Mammary epithelial cell (primary cell): ENCODE measurements at regions of chr3 and their contacts with region 1.

Region 1: GRCh38 chr3:50611464-50612233 is at the start of gene CISH:
- DNase-seq: peak; percentile 92
- H3K4me3 ChIP-seq: peak within 1 kb of the TSS; percentile 61 to 82 (median 64)
- H3K27ac ChIP-seq: peak within 1 kb of the TSS; percentile 4
- H3K4me1 ChIP-seq: peaks cover 32% of the 10 kb centered on the region
- H3K27me3 ChIP-seq: no peaks in the 10 kb centered on the region
- CTCF ChIP-seq: peak; percentile 8 to 41
- total RNA-seq, gene CISH: 1.8 to 2.8 TPM

Region 2: DNA sequence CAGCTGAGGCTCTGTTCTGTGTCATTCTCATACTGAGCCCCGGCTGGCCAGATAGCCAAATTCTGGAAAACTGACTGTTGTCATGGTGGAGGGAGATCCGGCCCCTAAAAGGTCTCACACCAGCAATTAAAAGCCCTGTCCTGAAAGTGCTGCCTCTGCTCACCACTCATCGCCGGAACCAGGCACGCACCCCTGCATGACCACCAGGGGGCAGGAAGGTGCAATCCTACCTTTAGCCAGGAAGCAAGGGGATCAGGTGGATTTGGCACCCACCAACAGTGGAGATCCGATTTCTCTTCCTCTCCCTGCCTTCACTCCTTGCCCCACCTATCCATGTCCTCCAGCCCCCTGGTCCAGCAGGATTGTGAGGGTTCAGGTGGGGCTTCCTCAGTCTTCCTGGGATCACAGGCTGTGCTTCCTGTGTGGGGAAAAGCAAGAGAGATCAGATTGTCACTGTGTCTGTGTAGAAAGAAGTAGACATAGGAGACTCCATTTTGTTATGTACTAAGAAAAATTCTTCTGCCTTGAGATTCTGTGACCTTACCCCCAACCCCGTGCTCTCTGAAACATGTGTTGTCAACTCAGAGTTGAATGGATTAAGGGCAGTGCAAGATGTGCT is 92.1 kb before region 1 on chr3:
- CTCF ChIA-PET with region 1: no interaction called
- dilution Hi-C with region 1: no loop called
- in situ Hi-C with region 1: no loop called
- intact Hi-C with region 1: loop called (anchors 1 kb)
- DNase-seq: peak; percentile 38
- H3K4me3 ChIP-seq: no peak overlapping the region
- H3K27ac ChIP-seq: no peak overlapping the region
- H3K4me1 ChIP-seq: no peaks in the 10 kb centered on the region
- H3K27me3 ChIP-seq: no peaks in the 10 kb centered on the region
- CTCF ChIP-seq: peak; percentile 98

Region 3: DNA sequence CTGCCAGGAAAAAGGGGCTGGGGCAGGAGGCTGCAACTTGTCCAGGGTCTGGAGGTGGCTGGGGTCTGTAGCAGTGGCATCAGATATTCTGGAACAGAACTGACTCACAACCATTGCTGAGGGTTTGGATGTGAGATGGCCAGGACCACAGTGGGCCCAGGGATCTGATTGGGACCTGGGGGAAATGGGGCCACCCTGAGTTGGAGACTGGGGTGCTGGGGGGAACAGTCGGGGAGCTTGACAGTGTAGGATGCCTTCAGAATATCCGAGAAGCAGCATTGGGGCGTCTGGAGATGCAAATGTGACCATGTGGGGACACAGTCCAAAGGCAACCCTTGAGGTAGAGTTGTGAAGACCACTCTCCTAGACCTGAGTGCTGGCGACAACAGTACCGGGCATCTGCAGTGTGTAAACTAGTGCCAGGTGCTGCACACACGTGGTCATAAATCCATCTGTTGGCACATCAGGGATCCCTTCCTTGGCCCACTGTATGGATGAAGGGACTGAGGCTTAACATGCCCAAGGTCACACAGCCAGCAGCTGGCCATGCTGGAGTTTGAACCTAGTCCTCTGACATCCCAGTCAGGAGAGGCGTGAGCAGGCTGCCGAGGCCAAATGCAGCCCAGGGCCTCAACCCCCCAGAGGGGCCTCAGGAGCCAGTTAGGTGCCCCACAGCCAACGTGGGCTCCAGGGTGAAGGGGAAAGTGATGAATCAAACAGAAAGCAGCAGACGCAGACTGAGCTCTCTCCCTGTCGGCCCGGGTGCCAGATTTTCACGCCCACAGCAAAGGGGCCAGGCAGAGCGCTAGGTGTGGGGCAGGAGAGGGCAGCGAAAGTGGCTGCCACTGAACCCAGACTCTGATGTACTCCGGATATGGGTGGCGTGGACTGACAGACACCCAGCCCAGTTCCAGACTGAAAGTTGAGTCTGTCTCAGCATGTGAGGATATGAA is 23.6 kb before region 1 on chr3:
- CTCF ChIA-PET with region 1: interaction called, 11 read pairs
- dilution Hi-C with region 1: no loop called
- in situ Hi-C with region 1: no loop called
- intact Hi-C with region 1: loop called (anchors 2 kb)
- DNase-seq: no peak
- H3K4me3 ChIP-seq: no peak overlapping the region
- H3K27ac ChIP-seq: no peak overlapping the region
- H3K4me1 ChIP-seq: peaks cover 4% of the 10 kb centered on the region
- H3K27me3 ChIP-seq: no peaks in the 10 kb centered on the region
- CTCF ChIP-seq: no peak

Region 4: GRCh38 chr3:50671331-50671730 is 59.7 kb after region 1 on chr3:
- CTCF ChIA-PET with region 1: no interaction called
- dilution Hi-C with region 1: no loop called
- in situ Hi-C with region 1: no loop called
- intact Hi-C with region 1: no loop called
- DNase-seq: peak; percentile 71
- H3K4me3 ChIP-seq: no peak overlapping the region
- H3K27ac ChIP-seq: no peak overlapping the region
- H3K4me1 ChIP-seq: peaks cover 8% of the 10 kb centered on the region
- H3K27me3 ChIP-seq: peaks cover 28% of the 10 kb centered on the region
- CTCF ChIP-seq: no peak

Region 5: GRCh38 chr3:50885070-50885850 is 273.6 kb after region 1 on chr3:
- CTCF ChIA-PET with region 1: no interaction called
- dilution Hi-C with region 1: no loop called
- in situ Hi-C with region 1: no loop called
- intact Hi-C with region 1: loop called (anchors 1 kb)
- DNase-seq: peak; percentile 9
- H3K4me3 ChIP-seq: no peak overlapping the region
- H3K27ac ChIP-seq: no peak overlapping the region
- H3K4me1 ChIP-seq: no peaks in the 10 kb centered on the region
- H3K27me3 ChIP-seq: no peaks in the 10 kb centered on the region
- CTCF ChIP-seq: peak; percentile 29 to 46

Region 6: DNA sequence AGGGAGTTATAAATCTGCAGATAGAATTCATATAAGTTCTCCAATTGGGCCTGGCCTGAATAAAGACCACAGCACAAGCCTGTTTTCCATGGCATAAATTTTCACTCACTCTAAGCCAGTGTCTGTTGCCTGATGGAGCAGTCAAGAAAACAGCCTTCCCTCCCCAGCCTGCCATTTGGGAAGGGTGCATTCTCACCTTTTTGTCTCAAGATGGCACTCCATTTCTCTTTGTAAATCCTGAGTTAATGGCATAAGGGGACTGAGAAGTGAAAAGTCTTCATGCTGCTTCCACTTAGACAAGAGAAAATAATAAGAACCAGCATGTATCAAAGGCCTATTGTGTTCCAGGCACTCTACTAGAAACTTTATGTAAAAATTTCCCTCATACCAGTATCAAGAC is 657.8 kb after region 1 on chr3:
- CTCF ChIA-PET with region 1: no interaction called
- dilution Hi-C with region 1: no loop called
- in situ Hi-C with region 1: no loop called
- intact Hi-C with region 1: loop called (anchors 1 kb)
- DNase-seq: peak; percentile 31
- H3K4me3 ChIP-seq: no peak overlapping the region
- H3K27ac ChIP-seq: no peak overlapping the region
- H3K4me1 ChIP-seq: no peaks in the 10 kb centered on the region
- H3K27me3 ChIP-seq: no peaks in the 10 kb centered on the region
- CTCF ChIP-seq: peak; percentile 33 to 66

Region 7: DNA sequence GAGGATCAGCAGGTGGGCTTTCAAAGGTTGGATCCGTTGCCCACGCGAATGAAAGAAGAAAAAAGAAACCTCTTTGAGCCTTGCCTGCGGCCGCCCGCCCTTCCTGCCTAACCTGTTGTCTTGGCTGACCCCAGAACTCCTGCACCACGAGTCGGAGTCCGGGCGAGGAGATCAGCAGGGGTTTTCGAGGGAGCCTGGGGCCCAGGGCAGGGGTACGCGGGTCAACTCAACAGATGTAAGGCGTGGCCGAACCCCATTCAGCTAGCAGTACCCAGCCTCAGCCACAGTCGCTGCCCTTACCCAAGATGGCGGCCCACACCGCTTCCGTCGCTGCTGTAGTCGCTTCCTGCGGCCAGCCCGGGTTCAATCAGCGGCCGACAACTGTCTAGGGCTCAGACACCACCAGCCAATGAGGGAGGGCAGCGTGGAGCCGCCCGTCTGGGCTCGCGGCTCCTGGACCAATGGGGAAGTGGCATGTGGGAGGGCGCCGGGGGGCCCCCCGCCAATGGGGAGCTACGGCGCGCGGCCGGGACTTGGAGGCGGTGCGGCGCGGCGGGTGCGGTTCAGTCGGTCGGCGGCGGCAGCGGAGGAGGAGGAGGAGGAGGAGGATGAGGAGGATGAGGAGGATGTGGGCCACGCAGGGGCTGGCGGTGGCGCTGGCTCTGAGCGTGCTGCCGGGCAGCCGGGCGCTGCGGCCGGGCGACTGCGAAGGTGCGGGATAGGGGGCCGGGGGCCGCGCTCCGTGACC is 773.3 kb after region 1 on chr3 and contains the start of gene MANF:
- CTCF ChIA-PET with region 1: no interaction called
- dilution Hi-C with region 1: loop called (anchors 5 kb)
- in situ Hi-C with region 1: loop called in 1 of 2 experiments (anchors 10 kb)
- intact Hi-C with region 1: loop called (anchors 1 kb)
- DNase-seq: peak; percentile 98
- H3K4me3 ChIP-seq: peak within 1 kb of the TSS; percentile 76 to 95 (median 95)
- H3K27ac ChIP-seq: peak within 1 kb of the TSS; percentile 91
- H3K4me1 ChIP-seq: peaks cover 29% of the 10 kb centered on the region
- H3K27me3 ChIP-seq: no peaks in the 10 kb centered on the region
- CTCF ChIP-seq: no peak
- total RNA-seq, gene MANF: 38.0 to 185 TPM

Region 8: DNA sequence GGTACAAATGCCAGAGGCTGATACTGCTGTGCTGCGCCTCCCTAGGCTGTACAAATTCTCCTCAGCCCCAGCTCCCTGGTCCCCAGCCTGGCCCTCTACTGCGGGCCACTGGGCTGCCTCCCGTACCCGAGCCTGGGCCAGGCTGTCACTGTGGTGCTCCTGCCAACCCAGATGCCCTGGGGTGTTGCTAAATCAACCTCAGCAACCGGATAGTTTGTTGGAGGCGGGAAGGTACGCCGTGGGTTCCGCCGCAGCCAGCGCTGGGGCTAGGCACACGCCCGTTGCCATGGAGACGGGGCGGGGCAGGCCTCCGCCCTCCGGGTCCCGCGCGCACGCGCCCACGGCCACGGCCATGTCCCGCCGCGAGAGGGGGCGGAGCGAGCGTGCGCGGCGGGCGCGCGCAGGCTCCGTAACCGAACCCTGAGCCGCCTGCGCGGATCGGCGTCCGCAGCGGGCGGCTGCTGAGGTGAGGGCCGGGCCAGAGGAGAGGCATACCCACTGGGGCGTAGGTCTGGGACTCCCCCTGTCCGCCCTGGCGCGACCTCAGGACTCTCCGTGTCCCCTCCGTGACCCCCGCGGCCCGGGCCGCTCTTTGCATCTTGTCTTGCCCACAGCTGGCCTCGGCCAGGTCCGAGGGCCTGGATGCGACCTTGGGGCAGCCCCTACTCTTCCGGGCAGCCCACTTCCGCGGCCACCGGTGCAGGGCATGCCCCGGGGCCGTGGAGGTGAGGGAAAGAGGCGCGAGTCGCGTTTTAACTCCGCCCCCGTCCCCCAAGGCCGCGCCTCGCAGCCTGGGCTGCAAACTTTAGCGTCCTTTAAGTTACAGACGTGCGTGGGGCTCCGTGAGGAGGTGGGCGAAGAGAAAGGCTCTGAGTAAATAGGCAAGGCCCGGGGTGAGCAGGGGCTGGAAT is 1059.4 kb after region 1 on chr3 and contains the start of gene TEX264:
- CTCF ChIA-PET with region 1: no interaction called
- dilution Hi-C with region 1: no loop called
- in situ Hi-C with region 1: no loop called
- intact Hi-C with region 1: loop called (anchors 10 kb)
- DNase-seq: peak; percentile 80
- H3K4me3 ChIP-seq: peak within 1 kb of the TSS; percentile 77 to 79 (median 79)
- H3K27ac ChIP-seq: peak within 1 kb of the TSS; percentile 75
- H3K4me1 ChIP-seq: peaks cover 61% of the 10 kb centered on the region
- H3K27me3 ChIP-seq: no peaks in the 10 kb centered on the region
- CTCF ChIP-seq: no peak
- total RNA-seq, gene TEX264: 36.0 to 49.7 TPM